Gastrocnemius medialis (tissue), 4 donors: ENCODE measurements at regions of chr17 and their contacts with region 1.

Region 1: GRCh38 chr17:18966831-18967624 is 15.1 kb downstream of the SLC5A10 start:
- DNase-seq: peak; percentile 35 to 61
- ATAC-seq: peak; percentile 94 to 96
- H3K4me3 ChIP-seq: no peak overlapping the region
- H3K27ac ChIP-seq: peak overlapping the region in 2 of 4 donors; percentile 49 to 54
- H3K4me1 ChIP-seq: peaks cover 8 to 13% of the 10 kb centered on the region in 2 donors
- H3K27me3 ChIP-seq: no peaks in the 10 kb centered on the region
- CTCF ChIP-seq: no peak
- POLR2A ChIP-seq: no peak

Region 2: DNA sequence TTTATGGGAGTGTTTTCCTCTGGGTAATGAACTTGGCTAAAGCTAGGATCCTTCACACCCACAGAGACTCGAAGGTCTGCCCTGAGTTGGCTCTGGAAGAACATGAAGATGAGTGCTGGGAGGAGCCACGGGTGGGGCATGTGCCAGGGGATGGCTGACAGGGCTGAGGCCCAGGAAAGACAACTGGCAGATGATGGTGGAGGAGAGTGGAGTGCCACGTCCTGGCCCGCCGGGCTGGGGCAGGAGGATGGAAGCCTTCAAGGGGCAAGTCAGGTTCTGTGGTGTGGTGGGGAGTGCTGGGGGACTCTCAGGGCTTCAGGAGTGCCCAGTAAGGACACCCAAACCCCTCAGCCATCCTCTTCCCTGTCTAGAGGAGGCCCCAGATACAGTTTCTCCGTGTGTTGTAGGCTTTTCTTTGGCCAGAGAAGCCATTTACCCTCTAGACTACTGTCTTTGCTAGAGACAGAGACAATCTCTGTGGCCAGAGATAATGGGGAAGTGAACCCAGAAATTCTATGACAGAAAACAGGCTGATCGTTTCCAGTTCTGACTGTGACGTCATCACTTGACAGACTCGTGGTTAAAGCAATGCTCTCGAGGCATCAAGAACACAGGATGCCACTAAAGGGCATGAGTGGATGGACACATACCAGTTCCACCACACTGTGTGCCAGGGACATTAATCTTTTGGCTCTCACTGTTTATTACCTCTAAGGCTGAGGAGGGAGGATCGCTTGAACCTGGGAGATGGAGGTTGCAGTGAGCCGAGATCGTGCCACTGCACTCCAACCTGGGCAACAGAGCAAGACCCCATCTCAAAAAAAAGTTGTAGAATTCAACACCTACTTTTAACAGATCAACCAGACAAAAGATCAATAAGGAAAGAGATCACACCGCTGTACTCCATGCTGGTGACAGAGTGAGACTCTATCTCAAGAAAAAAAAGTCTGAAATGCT is 33.6 kb before region 1 on chr17:
- in situ Hi-C with region 1: no loop called
- intact Hi-C with region 1: no loop called
- DNase-seq: no peak
- ATAC-seq: no peak
- H3K4me3 ChIP-seq: no peak overlapping the region
- H3K27ac ChIP-seq: no peak overlapping the region
- H3K4me1 ChIP-seq: no peaks in the 10 kb centered on the region
- H3K27me3 ChIP-seq: peaks cover 0 to 4% (median 0%) of the 10 kb centered on the region in 3 donors
- CTCF ChIP-seq: no peak
- POLR2A ChIP-seq: no peak

Region 3: DNA sequence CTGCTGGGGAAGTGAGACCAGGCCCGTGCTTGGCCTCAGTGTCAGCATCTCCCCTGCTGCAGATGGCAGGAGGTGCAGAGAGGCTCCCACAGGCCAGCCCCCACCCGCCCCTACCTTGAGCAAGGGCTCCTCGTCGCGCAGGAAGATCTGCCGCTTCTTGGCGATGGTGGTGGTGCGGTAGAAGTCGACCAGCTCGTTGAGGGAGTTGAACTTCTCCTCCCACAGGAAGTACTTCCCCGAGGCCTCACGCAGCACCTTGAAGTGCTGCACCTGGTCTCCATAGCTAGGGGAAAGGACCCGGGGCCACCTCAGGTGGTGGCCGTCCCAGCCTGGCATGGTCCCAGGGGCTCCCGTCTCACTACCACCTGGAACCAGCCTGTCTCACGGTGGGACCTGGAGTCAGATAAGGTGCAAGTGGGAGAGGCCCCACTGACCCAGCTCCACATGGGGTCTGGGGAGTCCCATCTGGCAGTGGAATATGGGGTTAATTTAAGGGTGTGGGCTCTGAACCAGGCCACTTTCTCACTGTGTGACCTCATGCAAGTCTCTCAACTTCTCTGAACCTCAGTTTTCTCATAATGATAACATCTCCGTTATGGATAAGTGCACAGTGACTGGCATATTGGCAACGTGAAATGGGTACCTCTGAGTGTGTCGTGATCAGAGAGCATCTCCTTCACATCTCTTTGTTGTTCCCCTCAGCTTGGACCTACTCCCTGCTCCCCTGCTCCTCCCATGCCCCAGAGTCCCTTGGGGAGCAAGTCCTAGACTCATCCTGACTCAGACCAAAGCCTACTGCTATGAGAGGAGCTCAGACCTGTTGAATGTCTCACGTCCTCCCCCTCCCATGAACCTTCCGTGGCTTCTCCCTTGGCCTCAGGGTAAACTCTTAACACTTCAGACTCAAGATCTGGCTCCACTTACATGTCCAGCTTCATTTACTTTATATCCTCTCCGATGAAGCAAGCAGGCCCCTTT is 57.4 kb after region 1 on chr17:
- in situ Hi-C with region 1: loop called in 1 of 4 experiments (anchors 10 kb)
- intact Hi-C with region 1: loop called (anchors 5 kb)
- DNase-seq: no peak
- ATAC-seq: no peak
- H3K4me3 ChIP-seq: no peak overlapping the region
- H3K27ac ChIP-seq: no peak overlapping the region
- H3K4me1 ChIP-seq: no peaks in the 10 kb centered on the region
- H3K27me3 ChIP-seq: no peaks in the 10 kb centered on the region
- CTCF ChIP-seq: no peak
- POLR2A ChIP-seq: no peak